Sigmoid colon (tissue), 7 donors: ENCODE measurements at regions of chr3 and their contacts with region 1.

Region 1: GRCh38 chr3:113287803-113288648 is 76.7 kb downstream of the BOC start:
- DNase-seq: peak; percentile 72
- H3K4me3 ChIP-seq: no peak overlapping the region
- H3K27ac ChIP-seq: peak overlapping the region; percentile 56 to 69 (median 66)
- H3K4me1 ChIP-seq: peaks cover 0 to 59% (median 46%) of the 10 kb centered on the region in 4 donors
- H3K27me3 ChIP-seq: no peaks in the 10 kb centered on the region
- CTCF ChIP-seq: peak; percentile 99 to 100 (median 99)
- EP300 ChIP-seq: no peak
- POLR2A ChIP-seq: no peak

Region 2: DNA sequence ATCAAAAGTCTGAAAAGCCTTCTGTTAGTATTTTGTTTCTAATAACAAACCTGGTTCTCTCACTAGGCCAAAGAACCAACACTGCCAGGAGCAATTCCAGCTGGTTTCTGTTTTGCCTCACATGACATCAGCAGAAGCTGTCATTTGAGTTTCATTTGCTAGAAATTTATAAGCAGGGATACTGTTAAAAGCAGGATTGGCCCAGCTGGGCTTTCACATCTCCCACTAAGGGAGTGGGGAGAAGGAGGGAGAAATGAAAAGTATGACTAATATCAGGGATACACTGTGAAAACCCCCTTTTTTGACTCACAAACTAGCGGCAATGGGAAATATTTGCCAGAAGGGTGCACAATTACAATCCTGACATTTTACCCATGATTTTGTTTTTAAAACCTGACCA is 652.4 kb before region 1 on chr3:
- intact Hi-C with region 1: loop called (anchors 10 kb)
- DNase-seq: peak; percentile 90
- H3K4me3 ChIP-seq: peak overlapping the region in 3 of 4 donors; percentile 19 to 51 (median 48)
- H3K27ac ChIP-seq: peak overlapping the region; percentile 80 to 86 (median 84)
- H3K4me1 ChIP-seq: peaks cover 2 to 96% (median 84%) of the 10 kb centered on the region in 4 donors
- H3K27me3 ChIP-seq: no peaks in the 10 kb centered on the region
- CTCF ChIP-seq: no peak
- EP300 ChIP-seq: peak; percentile 47 to 92 (median 77)
- POLR2A ChIP-seq: peak in 1 of 2 donors; percentile 11

Region 3: DNA sequence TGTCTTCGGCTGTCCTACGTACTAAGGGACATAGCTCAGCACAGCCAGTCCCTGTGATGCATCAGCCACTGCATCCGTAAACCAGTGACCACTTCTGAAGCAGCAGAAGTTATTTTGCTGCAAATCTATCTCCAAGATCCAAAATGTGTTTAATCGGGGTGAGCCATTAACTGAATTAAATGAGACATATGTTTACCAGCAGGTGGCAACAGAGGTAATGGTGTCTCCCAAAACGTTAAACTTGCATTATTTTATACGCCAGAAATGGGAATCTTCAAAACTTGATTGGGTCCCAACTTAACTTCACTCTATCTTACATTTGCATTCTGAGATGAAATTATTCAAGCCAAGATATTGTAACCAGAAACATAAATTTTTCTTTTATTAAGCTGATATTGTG is 152.0 kb before region 1 on chr3:
- intact Hi-C with region 1: loop called (anchors 2 kb)
- DNase-seq: no peak
- H3K4me3 ChIP-seq: no peak overlapping the region
- H3K27ac ChIP-seq: peak overlapping the region; percentile 10 to 57 (median 38)
- H3K4me1 ChIP-seq: peaks cover 0 to 32% (median 24%) of the 10 kb centered on the region in 4 donors
- H3K27me3 ChIP-seq: no peaks in the 10 kb centered on the region
- CTCF ChIP-seq: peak; percentile 38 to 58 (median 58)
- EP300 ChIP-seq: no peak
- POLR2A ChIP-seq: no peak

Region 4: GRCh38 chr3:113211330-113212149 is 76.5 kb before region 1 on chr3 and contains the start of gene BOC:
- intact Hi-C with region 1: loop called (anchors 2 kb)
- DNase-seq: peak; percentile 77
- H3K4me3 ChIP-seq: peak within 1 kb of the TSS; percentile 73 to 97 (median 91)
- H3K27ac ChIP-seq: peak within 1 kb of the TSS; percentile 95 to 97 (median 96)
- H3K4me1 ChIP-seq: peaks cover 0 to 53% (median 25%) of the 10 kb centered on the region in 4 donors
- H3K27me3 ChIP-seq: no peaks in the 10 kb centered on the region
- CTCF ChIP-seq: no peak
- EP300 ChIP-seq: no peak
- POLR2A ChIP-seq: no peak
- total RNA-seq, gene BOC: 80.3 to 122 (median 103) TPM

Region 5: GRCh38 chr3:113275929-113276750 is 11.9 kb before region 1 on chr3:
- intact Hi-C with region 1: no loop called
- DNase-seq: peak; percentile 78
- H3K4me3 ChIP-seq: peak overlapping the region in 3 of 4 donors; percentile 23 to 38 (median 37)
- H3K27ac ChIP-seq: peak overlapping the region; percentile 78 to 88 (median 87)
- H3K4me1 ChIP-seq: peaks cover 0 to 37% (median 33%) of the 10 kb centered on the region in 4 donors
- H3K27me3 ChIP-seq: no peaks in the 10 kb centered on the region
- CTCF ChIP-seq: peak; percentile 11 to 35 (median 16)
- EP300 ChIP-seq: no peak
- POLR2A ChIP-seq: no peak

Region 6: GRCh38 chr3:113436809-113437208 is 148.8 kb after region 1 on chr3:
- intact Hi-C with region 1: loop called (anchors 10 kb)
- DNase-seq: no peak
- H3K4me3 ChIP-seq: no peak overlapping the region
- H3K27ac ChIP-seq: no peak overlapping the region
- H3K4me1 ChIP-seq: peaks cover 0 to 8% (median 3%) of the 10 kb centered on the region in 4 donors
- H3K27me3 ChIP-seq: no peaks in the 10 kb centered on the region
- CTCF ChIP-seq: no peak
- EP300 ChIP-seq: no peak
- POLR2A ChIP-seq: no peak

Region 7: DNA sequence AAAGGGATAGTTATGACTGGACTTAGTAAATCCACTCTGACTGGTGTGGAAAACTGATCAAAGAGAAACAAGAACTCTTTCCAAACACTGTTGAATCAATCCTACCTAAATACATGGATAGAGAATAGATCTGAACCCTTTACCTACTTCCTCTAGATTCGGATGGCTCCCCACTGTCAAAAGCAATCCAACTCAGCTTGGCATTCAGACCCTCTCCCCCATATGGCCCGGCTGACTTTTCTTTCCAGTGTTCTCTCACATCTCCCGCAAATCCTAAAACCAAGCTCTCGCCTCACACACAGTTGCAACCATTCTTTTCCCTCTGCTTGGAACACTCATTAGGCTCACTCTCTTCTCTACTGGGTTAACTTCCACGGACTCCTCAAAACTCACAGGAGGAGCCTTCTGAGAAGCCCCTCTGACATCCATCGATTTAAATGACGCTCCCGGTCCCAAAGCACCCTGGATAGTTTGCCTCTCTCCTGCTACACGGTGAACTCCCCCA is 226.3 kb after region 1 on chr3:
- intact Hi-C with region 1: loop called (anchors 10 kb)
- DNase-seq: no peak
- H3K4me3 ChIP-seq: peak overlapping the region; percentile 72 to 93 (median 88)
- H3K27ac ChIP-seq: peak overlapping the region; percentile 87 to 95 (median 92)
- H3K4me1 ChIP-seq: peaks cover 0 to 19% (median 16%) of the 10 kb centered on the region in 4 donors
- H3K27me3 ChIP-seq: no peaks in the 10 kb centered on the region
- CTCF ChIP-seq: no peak
- EP300 ChIP-seq: no peak
- POLR2A ChIP-seq: no peak